Heart right ventricle (tissue), 16 donors: ENCODE measurements at regions of chr3 and their contacts with region 1.

Region 1: DNA sequence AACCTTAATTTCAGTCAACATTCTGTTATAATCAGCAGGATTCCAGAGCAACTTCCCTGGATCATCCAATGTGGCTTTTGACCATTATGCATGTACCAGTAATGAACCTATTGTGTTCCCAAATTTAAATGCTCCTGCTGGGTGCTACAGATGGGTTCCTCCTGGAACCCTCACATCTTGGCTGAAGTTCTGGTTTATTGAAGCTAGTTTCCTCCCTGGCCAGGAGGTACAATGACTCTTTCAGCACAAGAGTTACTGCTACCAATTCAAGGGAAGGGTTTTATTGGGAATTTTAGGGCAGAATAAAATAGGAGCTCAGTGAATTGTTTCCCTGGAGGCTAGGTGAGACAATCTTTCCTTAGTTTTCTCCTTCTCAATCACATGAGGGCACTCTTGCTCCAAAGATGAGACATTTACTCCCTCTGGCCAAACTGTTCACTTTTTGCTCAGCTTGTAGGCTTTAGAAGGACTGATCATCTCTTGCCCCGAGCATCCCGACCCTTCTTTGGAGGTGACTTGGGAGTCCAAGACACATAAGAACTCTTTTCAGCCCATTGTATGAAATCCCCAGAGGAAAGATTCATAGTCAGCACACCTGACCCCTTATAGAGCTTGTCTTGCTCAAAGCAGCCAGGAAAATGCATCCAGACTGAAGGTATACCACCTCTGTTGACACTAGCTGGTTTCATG is 8.8 kb upstream of the NPHP3 start:
- DNase-seq: peak in 1 of 2 donors; percentile 21
- ATAC-seq: peak; percentile 59 to 83 (median 75)
- H3K4me3 ChIP-seq: no peak overlapping the region
- H3K27ac ChIP-seq: no peak overlapping the region
- H3K4me1 ChIP-seq: peaks cover 0 to 5% (median 0%) of the 10 kb centered on the region in 9 donors
- H3K27me3 ChIP-seq: peaks cover 0 to 20% (median 0%) of the 10 kb centered on the region in 7 donors
- CTCF ChIP-seq: peak in 8 of 9 donors; percentile 17 to 64 (median 50)

Region 2: GRCh38 chr3:133377396-133377795 is 646.4 kb after region 1 on chr3:
- intact Hi-C with region 1: loop called in 7 of 10 experiments (anchors 2 to 10 kb)
- DNase-seq: no peak
- ATAC-seq: peak; percentile 27 to 82 (median 60)
- H3K4me3 ChIP-seq: no peak overlapping the region
- H3K27ac ChIP-seq: no peak overlapping the region
- H3K4me1 ChIP-seq: peaks cover 0 to 6% (median 2%) of the 10 kb centered on the region in 9 donors
- H3K27me3 ChIP-seq: peaks cover 0 to 5% (median 0%) of the 10 kb centered on the region in 7 donors
- CTCF ChIP-seq: peak in 8 of 9 donors; percentile 43 to 61 (median 50)

Region 3: DNA sequence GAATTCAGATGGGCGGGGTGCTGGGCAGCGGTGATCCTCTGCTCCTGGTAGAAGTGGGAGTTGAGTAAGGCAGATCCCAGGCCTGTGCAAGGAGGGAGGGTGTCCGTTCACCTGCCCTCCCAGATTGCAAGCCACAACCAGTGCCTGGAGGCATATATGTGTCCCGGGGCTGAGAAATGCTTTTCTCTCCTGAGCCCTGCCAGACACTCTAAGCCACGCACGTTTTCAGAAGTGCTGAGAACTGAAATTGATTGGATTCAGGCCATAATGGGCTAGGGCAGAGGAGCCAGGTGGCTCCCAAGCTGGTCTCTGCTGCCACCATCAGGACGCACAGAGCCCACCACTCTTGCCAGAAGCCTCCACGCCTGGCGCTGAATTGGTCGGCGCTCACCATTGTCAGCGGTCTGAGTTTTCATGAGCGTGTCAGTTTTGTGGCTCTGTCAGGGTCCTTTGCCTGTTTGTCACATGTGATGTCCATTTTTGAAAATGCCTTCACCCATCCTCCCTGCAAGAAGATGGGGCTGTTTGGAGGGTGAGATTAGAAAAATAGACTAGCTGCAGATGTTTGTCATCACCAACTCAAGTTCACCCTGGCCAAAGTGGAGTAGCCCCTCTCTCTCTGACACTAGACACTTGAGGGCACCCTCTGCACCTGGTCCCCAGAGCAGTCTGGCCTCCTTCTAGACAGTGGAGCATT is 653.4 kb after region 1 on chr3:
- intact Hi-C with region 1: loop called (anchors 1 to 10 kb)
- DNase-seq: peak; percentile 55 to 60
- ATAC-seq: peak; percentile 87 to 93 (median 89)
- H3K4me3 ChIP-seq: no peak overlapping the region
- H3K27ac ChIP-seq: no peak overlapping the region
- H3K4me1 ChIP-seq: peaks cover 0 to 7% (median 0%) of the 10 kb centered on the region in 9 donors
- H3K27me3 ChIP-seq: peaks cover 0 to 9% (median 0%) of the 10 kb centered on the region in 7 donors
- CTCF ChIP-seq: peak; percentile 46 to 86 (median 78)

Region 4: DNA sequence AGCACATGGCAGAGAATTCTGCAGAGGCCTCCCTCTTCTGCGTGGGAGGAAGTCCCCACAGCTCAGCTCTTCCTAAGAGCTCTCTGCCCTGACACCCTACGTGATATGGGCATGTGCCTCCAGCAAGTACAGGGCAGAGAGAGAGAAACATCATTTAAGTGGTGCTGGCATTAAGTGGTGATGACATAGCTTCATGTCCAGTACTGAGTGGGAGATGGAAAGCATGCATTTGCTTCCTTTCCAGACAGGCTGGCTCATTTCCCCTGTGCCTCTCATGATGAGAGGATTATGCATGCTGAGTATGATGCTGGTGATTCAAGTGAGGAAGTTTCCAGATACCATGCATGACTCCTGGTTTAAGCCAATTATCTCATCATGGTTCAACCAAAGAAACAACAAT is 695.7 kb after region 1 on chr3:
- intact Hi-C with region 1: loop called (anchors 1 to 5 kb)
- DNase-seq: no peak
- ATAC-seq: no peak
- H3K4me3 ChIP-seq: no peak overlapping the region
- H3K27ac ChIP-seq: no peak overlapping the region
- H3K4me1 ChIP-seq: peaks cover 0 to 5% (median 0%) of the 10 kb centered on the region in 9 donors
- H3K27me3 ChIP-seq: peaks cover 0 to 25% (median 13%) of the 10 kb centered on the region in 7 donors
- CTCF ChIP-seq: no peak

Region 5: DNA sequence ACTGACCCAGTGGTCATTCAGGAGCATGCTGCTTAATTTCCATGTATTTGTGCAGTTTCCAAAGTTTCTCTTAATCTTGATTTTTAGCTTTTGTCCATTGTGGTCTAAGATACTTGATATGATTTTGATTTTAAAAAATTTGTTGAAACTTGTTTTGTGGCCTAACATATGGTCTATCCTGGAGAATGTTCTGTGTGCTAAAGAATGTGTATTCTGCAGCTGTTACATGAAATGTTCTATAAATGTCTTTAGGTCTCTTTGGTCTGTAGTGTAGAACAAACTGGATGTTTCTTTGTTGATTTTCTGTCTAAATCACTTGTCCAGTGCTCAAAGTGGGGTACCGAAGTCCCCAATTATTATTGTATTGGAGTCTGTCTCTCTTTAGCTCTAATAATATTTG is 1772.2 kb after region 1 on chr3:
- intact Hi-C with region 1: loop called in 1 of 10 experiments (anchors 5 kb)
- DNase-seq: no peak
- ATAC-seq: no peak
- H3K4me3 ChIP-seq: no peak overlapping the region
- H3K27ac ChIP-seq: no peak overlapping the region
- H3K4me1 ChIP-seq: no peaks in the 10 kb centered on the region
- H3K27me3 ChIP-seq: no peaks in the 10 kb centered on the region
- CTCF ChIP-seq: no peak